ENCODE measurements at regions of chr20 and their contacts with region 1.

Region 1: GRCh38 chr20:36861875-36862801 is 13.8 kb upstream of the TLDC2 start:
- DNase-seq: peak in 1 of 2 donors; percentile 96
- H3K4me3 ChIP-seq: peak overlapping the region; percentile 72 to 93
- H3K27ac ChIP-seq: peak overlapping the region; percentile 97
- H3K4me1 ChIP-seq: peaks cover 60% of the 10 kb centered on the region
- H3K27me3 ChIP-seq: no peaks in the 10 kb centered on the region
- CTCF ChIP-seq: no peak
- POLR2A ChIP-seq: peak in 1 of 2 donors; percentile 88

Region 2: GRCh38 chr20:36573103-36573794 is 288.9 kb before region 1 on chr20 and contains the start of gene TGIF2:
- intact Hi-C with region 1: loop called (anchors 10 kb)
- DNase-seq: no peak
- H3K4me3 ChIP-seq: peak within 1 kb of the TSS; percentile 61 to 83
- H3K27ac ChIP-seq: peak within 1 kb of the TSS; percentile 98
- H3K4me1 ChIP-seq: peaks cover 29% of the 10 kb centered on the region
- H3K27me3 ChIP-seq: no peaks in the 10 kb centered on the region
- CTCF ChIP-seq: no peak
- POLR2A ChIP-seq: peak in 1 of 2 donors; percentile 63
- total RNA-seq, gene TGIF2: 9.3 TPM

Region 3: DNA sequence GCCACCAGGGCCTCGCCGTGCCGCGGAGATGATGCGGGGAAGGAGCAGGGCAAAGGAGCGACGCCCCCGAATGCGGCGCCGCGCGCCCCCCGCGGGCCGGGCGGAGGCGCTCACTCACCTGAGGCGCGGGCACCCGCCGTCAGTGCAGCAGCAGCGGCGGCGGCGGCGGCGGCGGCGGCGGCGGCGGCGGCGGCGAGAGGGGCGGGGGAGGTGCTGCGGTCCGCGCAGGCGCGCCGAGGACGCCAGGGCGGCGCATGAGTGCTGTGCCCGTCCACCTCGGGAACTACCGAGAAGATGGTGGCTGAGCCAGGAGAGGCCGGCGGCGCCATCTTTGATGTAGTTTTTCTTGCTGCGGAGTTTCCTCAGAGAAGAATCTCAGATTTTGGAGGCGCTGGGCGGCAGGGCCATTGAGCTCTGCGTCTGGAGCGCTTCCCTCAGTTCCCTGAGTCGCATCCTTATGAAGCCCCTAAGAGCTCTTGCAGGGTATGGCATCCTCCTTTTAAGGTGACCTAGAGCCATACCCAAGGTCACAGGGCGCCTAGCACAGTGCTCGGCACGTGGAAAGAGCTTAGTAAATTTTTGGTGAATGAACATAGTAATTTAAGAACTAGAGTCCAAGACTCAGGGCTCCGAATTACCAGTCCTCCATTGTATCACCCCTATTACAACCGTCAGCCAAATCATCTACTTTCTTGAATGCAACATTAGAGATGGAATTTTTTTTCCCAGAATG is 116.0 kb before region 1 on chr20 and contains the start of gene NDRG3:
- intact Hi-C with region 1: no loop called
- DNase-seq: peak in 1 of 2 donors; percentile 90
- H3K4me3 ChIP-seq: peak within 1 kb of the TSS; percentile 61 to 91
- H3K27ac ChIP-seq: peak within 1 kb of the TSS; percentile 65
- H3K4me1 ChIP-seq: peaks cover 16% of the 10 kb centered on the region
- H3K27me3 ChIP-seq: no peaks in the 10 kb centered on the region
- CTCF ChIP-seq: no peak
- POLR2A ChIP-seq: no peak
- total RNA-seq, gene NDRG3: 21.1 TPM

Region 4: DNA sequence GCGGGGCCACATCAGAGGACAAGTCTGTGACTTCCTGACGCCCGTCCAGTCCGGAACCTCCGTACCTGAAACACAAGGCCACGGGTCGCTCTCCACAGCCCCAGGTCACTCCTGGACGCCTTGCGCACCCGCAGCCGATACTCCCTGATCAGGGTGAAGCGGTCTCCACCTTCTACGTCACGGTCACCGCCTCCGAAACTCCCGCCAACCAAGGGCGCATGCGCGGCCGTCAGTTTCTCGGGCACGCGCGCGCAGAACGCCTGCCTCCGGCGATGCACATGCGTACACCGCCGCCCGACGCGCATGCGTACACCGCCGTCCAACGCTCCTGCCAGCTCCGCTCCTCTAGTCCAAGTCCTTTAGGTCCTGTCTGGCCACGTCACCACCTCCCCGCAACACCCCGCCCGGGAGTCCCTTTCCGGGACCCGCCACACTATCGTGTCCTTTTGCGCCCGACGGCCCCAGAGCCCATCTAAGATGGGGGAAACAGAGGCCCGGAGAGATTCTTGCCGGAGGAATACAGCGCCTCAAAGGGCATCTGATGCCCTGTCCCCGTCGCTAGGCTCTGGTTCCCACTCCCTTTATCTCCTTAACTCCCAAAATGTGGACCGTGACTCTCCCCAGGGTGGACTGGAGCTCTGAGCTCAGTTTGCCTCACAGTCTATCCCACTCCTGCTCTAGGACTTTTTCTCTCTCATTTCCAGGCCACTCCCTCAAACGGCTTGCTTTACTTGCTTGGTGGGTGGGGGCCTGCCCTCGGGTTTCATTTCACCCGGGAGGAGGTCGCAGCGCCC is 88.3 kb before region 1 on chr20 and contains the start of gene DSN1:
- intact Hi-C with region 1: loop called (anchors 5 kb)
- DNase-seq: peak; percentile 97 to 99
- H3K4me3 ChIP-seq: peak within 1 kb of the TSS; percentile 54 to 68
- H3K27ac ChIP-seq: peak within 1 kb of the TSS; percentile 99
- H3K4me1 ChIP-seq: peaks cover 22% of the 10 kb centered on the region
- H3K27me3 ChIP-seq: no peaks in the 10 kb centered on the region
- CTCF ChIP-seq: no peak
- POLR2A ChIP-seq: peak in 1 of 2 donors; percentile 76
- total RNA-seq, gene DSN1: 4.7 TPM

Region 5: GRCh38 chr20:36819659-36820058 is 42.5 kb before region 1 on chr20:
- intact Hi-C with region 1: loop called (anchors 10 kb)
- DNase-seq: no peak
- H3K4me3 ChIP-seq: no peak overlapping the region
- H3K27ac ChIP-seq: peak overlapping the region; percentile 35
- H3K4me1 ChIP-seq: peaks cover 24% of the 10 kb centered on the region
- H3K27me3 ChIP-seq: no peaks in the 10 kb centered on the region
- CTCF ChIP-seq: no peak
- POLR2A ChIP-seq: no peak